IMR-90 (cell line): ENCODE measurements at regions of chrX and their contacts with region 1.

Region 1: DNA sequence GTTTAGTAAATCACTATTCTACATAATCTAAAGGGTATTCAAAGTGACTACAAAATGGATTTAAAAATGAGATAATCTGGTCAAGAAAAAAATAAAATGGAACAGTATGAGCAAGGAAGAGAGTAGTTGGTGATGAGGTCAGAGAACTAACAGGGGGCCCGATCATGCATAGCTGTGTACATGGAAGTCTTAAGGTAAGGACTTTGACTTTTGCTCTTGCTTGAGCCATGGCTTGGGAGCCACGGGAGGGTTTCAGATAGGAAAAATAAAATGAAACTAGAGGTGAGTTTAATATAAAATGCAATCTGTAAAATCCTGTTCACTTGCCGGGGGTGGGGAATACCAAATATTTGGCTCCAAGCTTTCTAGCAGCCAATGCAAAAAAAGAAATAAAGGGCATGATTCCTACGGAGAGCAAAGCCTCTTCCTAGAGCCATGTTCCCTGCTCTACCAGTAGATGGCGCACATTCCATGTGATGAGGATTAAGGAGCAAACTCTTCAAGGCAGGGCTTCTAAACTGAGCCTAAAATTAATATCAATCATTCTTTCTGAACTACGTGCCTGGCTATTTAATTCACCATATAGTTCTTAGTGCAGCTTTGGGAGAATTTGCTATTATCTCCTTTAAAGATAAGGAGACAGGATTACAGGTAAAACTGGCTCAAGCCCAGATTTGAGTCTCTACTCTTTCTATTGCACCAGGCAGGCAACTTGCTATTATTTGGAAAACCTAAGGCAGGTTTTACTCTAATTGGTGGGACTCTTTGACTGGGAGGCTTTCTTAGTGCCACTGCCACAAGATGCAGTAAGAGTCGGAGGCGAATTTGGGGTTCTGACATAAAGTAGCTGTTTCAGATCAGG is 6.8 kb upstream of the CLCN5 start:
- DNase-seq: peak; percentile 62
- ATAC-seq: peak; percentile 96
- H3K4me3 ChIP-seq: no peak overlapping the region
- H3K27ac ChIP-seq: no peak overlapping the region
- H3K4me1 ChIP-seq: no peaks in the 10 kb centered on the region
- H3K27me3 ChIP-seq: peaks cover 7% of the 10 kb centered on the region
- CTCF ChIP-seq: peak; percentile 87
- POLR2A ChIP-seq: no peak
- RAD21 ChIP-seq: peak; percentile 81

Region 2: DNA sequence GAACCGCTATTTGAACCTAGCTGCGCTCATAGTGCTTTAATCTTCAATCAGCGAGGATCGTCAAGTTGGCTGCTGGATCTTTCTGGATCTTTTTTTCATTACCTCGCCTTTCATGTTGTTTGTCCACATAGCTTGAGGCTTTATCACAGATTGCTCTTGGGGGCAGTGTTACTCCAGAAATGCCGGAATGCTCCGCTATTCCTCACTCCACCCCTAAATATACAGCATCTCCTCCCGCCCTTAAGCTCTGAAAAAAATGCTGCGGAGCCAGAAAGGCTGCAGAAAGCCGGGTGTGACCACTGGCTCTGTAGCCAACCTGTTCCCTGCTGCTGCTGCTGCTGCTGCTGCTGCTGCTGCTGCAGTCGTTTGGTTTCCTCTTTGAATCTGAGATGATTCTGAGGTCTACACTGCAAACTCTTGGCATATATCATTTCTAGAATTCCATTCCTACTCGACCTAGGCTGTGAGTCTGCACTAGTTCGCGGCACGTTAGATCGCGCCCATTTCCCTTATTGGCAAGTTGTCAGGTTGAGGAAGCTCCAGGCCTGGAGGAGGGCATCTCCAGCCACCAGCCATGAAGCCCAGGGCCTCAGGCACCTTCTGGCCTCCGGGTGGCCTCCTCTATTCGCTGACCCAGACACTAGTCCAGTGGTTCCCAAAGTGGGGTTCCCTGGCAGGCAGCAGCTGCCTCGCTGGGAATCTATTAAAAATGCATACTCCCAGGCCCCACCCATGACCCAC is 1284.1 kb before region 1 on chrX:
- CTCF ChIA-PET with region 1: no interaction called
- POLR2A ChIA-PET with region 1: no interaction called
- dilution Hi-C with region 1: no loop called
- in situ Hi-C with region 1: no loop called
- intact Hi-C with region 1: loop called (anchors 1 kb)
- DNase-seq: peak; percentile 87
- ATAC-seq: peak; percentile 97
- H3K4me3 ChIP-seq: no peak overlapping the region
- H3K27ac ChIP-seq: no peak overlapping the region
- H3K4me1 ChIP-seq: no peaks in the 10 kb centered on the region
- H3K27me3 ChIP-seq: peaks cover 3% of the 10 kb centered on the region
- CTCF ChIP-seq: peak; percentile 78
- POLR2A ChIP-seq: no peak
- RAD21 ChIP-seq: peak; percentile 88

Region 3: GRCh38 chrX:50081282-50081889 is 165.8 kb after region 1 on chrX:
- CTCF ChIA-PET with region 1: no interaction called
- POLR2A ChIA-PET with region 1: no interaction called
- dilution Hi-C with region 1: no loop called
- in situ Hi-C with region 1: no loop called
- intact Hi-C with region 1: loop called (anchors 2 kb)
- DNase-seq: peak; percentile 13
- ATAC-seq: peak; percentile 44; the same call in 1 of the 2 replicates
- H3K4me3 ChIP-seq: no peak overlapping the region
- H3K27ac ChIP-seq: no peak overlapping the region
- H3K4me1 ChIP-seq: no peaks in the 10 kb centered on the region
- H3K27me3 ChIP-seq: no peaks in the 10 kb centered on the region
- CTCF ChIP-seq: peak; percentile 38
- POLR2A ChIP-seq: no peak
- RAD21 ChIP-seq: peak; percentile 43; the same call in 1 of the 2 replicates

Region 4: GRCh38 chrX:50204364-50204899 is 288.8 kb after region 1 on chrX and contains the start of gene CCNB3:
- CTCF ChIA-PET with region 1: interaction called, 3 read pairs
- POLR2A ChIA-PET with region 1: no interaction called
- dilution Hi-C with region 1: no loop called
- in situ Hi-C with region 1: no loop called
- intact Hi-C with region 1: loop called (anchors 1 kb)
- DNase-seq: peak; percentile 56
- ATAC-seq: peak; percentile 85
- H3K4me3 ChIP-seq: 0 out of 2 replicates have a peak within 1 kb of the TSS, but pooled peaks have one; percentile 13
- H3K27ac ChIP-seq: no peak within 1 kb of the TSS
- H3K4me1 ChIP-seq: no peaks in the 10 kb centered on the region
- H3K27me3 ChIP-seq: no peaks in the 10 kb centered on the region; the same call in none of the 2 replicates
- CTCF ChIP-seq: peak; percentile 82
- POLR2A ChIP-seq: no peak
- RAD21 ChIP-seq: peak; percentile 50
- total RNA-seq, gene CCNB3: 0.18 and 0.28 TPM in 2 replicates

Region 5: DNA sequence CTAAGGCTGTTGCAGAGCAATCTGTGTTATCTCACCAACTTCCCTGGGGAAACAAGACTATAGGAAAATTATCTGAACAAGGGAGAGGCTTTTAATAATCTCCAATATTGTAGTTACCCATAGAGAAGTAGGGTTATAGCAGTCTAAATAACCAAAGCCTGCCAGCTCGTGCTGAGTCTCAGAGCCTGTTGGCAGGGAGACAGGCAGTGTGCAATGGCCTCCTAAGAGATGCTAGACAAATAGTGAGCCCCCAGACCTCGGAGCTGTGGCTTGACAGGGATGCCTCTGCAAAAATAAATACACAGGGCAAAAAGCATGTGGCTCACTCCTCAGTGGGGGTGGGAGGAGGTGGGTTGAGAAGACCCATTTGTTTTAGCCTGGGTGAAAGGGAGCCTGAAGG is 478.3 kb after region 1 on chrX:
- CTCF ChIA-PET with region 1: no interaction called
- POLR2A ChIA-PET with region 1: no interaction called
- dilution Hi-C with region 1: no loop called
- in situ Hi-C with region 1: no loop called
- intact Hi-C with region 1: no loop called
- DNase-seq: no peak
- ATAC-seq: no peak
- H3K4me3 ChIP-seq: no peak overlapping the region
- H3K27ac ChIP-seq: no peak overlapping the region
- H3K4me1 ChIP-seq: no peaks in the 10 kb centered on the region
- H3K27me3 ChIP-seq: peaks cover 9% of the 10 kb centered on the region
- CTCF ChIP-seq: no peak
- POLR2A ChIP-seq: no peak
- RAD21 ChIP-seq: no peak